ENCODE measurements at regions of chr5 and their contacts with region 1.

Region 1: DNA sequence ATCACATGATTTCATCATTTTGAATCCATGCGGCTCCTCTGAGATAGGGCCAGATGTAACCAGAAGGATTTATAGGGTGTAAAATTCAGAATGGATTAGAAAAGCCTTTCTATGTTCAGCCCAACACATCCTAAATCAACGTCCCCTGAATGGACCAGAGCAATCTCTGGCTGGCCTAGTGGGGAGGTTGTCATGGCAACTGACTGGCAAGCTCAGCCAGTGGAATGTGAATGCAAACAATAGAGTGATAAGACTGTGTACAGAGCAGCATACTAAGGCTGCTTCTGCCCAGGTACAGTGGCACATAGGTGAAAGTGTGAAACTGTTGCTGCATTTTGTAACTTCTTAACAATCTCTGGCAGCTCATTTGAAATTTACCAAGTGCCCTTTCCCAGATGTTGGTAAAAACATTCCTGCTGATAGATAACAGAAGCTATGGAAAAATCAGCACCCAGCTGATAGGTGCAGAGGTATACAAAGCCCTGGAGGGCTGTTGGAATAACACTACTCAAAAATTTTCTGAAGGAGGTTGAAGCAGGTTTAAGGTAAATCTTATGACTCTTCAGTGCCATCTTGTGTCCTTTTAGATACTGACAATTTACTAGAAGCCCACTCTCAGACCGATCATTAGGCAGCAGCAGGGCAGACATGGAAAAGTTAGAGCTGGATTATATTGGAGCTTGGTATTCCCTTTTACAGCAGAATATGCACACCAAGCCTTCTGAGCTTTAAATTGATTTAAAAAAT is 267.2 kb downstream of the RAB3C start:
- DNase-seq: peak; percentile 26 to 34
- H3K4me3 ChIP-seq: no peak overlapping the region
- H3K4me1 ChIP-seq: no peaks in the 10 kb centered on the region
- H3K27me3 ChIP-seq: 0 out of 2 replicates have a peak, but pooled peaks cover 2% of the 10 kb centered on the region

Region 2: GRCh38 chr5:58505971-58506640 is 344.0 kb before region 1 on chr5:
- in situ Hi-C with region 1: loop called (anchors 25 kb)
- DNase-seq: no peak
- H3K4me3 ChIP-seq: no peak overlapping the region
- H3K4me1 ChIP-seq: no peaks in the 10 kb centered on the region; the same call in 1 of the 2 replicates
- H3K27me3 ChIP-seq: no peaks in the 10 kb centered on the region

Region 3: DNA sequence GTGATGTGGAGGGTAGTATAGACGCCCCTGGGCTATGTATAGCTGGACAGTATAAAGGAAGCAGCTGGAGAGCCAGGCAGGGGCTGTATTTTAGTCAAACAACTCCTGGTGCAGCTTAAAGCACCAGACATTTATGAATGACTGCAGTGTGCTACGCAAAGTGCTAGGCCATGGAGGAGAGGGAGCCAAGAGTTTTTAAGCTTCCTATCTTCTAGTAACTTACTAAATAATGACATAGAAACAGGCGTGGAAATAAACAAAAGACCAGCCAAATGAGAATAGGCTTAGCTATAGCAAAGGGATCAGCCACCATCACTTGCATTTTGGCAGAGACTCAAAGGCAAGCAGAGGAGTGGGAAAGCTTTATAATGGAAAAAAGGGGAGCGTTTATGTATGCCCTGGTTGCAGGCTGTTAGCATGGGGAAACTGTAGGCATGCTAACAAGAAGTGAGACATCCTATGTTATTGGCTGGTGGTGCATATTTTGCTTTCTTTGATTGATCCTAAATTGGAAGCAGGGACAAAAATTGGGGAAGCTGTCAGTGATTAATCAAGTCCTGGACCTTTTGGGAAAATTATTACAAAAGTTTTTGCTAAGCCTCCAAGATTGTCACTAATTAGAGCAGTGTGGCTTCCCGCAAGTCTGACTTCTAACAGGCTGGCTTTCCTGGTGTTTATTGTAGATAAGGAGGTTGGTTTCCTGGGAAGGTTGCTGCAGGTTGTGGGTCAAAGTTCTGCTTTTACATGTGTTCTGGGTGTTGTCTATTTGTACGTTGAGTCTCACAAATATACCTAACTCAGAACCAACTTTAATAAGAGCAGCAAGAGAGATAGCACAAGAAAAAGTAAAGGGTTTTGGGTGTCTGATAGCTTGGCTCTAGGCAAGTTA is 220.6 kb before region 1 on chr5:
- in situ Hi-C with region 1: no loop called
- DNase-seq: no peak
- H3K4me3 ChIP-seq: no peak overlapping the region
- H3K4me1 ChIP-seq: no peaks in the 10 kb centered on the region
- H3K27me3 ChIP-seq: no peaks in the 10 kb centered on the region

Region 4: GRCh38 chr5:58717303-58718007 is 132.6 kb before region 1 on chr5:
- in situ Hi-C with region 1: no loop called
- DNase-seq: no peak
- H3K4me3 ChIP-seq: no peak overlapping the region
- H3K4me1 ChIP-seq: no peaks in the 10 kb centered on the region
- H3K27me3 ChIP-seq: no peaks in the 10 kb centered on the region